Ascending aorta (tissue), 2 donors: ENCODE measurements at regions of chr6 and their contacts with region 1.

Region 1: DNA sequence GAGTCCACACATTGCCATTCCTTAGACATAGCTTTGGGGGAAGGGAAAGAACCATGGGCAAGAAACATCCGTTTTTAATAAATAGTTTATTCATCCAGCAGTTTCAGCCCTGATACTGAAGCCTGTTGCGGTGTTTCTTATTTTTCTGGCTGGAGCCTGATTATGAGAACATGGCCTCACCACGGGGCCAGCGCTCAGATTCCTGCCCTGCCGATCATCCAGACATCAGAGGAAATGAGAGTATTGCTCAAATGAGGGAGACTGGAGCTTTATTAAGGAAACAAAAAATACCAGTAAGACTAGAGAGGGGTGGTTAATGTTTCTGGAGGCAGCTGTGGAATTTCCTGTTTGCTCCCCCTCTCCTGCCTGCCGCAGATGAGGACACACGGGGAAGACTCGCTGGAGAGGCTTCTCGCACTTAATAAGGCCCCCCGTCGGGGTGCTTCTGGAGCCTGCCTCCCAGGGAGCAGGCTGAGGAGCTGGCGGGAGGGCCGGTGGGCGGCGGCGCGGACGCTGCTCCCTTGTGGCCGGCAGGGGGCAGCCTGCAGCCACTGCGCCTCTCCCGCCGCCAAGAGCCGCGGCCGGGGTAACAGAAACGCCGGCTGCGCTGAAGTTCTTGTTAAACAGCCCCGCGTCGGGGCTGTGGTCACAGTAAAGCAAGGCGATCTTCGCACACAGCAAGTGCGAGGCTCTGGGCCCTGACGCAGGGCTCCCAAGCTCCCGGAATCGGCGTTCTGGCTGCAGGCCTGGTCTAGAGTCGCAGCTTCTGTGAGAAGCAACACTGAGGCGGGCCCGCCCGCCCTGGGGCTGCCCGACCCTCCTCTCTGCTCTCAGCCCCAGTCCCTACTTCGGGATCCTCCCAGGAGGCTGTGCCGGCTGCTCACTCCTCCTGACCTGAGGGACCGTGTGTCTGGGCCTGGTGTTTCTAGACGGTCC is 17.5 kb downstream of the LEMD2 start:
- DNase-seq: peak in 1 of 2 donors; percentile 87
- H3K4me3 ChIP-seq: peak overlapping the region; percentile 18 to 42
- H3K27ac ChIP-seq: peak overlapping the region; percentile 80 to 92
- H3K4me1 ChIP-seq: peaks cover 12 to 44% of the 10 kb centered on the region in 2 donors
- H3K27me3 ChIP-seq: no peaks in the 10 kb centered on the region
- CTCF ChIP-seq: peak; percentile 92 to 97 (median 94)

Region 2: DNA sequence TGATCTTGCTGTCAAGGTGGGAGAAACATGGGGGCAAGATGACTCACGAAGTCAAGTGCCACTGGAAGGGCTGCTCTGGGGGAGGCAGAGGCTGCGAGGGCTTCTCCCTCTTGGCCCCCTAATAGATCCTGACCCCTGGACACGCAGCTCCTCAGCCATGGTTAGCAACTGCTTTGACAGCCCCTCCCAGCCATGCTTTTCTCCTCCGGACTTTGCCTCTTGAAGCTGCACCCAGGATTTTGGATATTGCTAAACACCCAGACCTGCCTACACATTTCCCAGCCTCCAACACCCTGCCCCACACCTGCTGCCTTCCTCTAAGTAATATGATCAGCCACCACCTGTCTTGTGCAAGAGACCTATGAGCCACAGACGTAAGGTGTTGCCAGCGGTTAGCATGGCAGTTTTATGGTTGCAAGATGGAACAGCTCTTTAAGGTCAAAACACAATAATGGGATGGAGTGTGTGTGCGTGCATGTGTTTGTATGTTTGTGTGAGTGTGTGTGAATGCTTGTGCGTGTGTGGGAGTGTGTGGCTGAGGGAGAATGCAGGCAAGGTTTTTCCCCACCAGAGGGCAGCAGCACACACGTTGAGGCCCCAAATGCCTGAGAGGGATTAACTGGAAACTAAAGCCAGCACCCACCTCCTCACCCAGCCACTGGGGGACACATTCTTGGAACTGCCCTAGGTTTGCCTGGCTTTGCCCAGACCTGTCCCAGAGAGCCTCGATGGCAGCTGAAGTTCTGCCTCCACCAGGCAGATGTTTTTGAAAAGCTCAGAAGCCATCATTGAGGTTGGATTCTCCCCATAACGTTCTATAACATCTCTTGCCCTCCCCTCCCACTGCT is 27.2 kb before region 1 on chr6:
- intact Hi-C with region 1: loop called (anchors 2 kb)
- DNase-seq: peak in 1 of 2 donors; percentile 79
- H3K4me3 ChIP-seq: no peak overlapping the region
- H3K27ac ChIP-seq: no peak overlapping the region
- H3K4me1 ChIP-seq: no peaks in the 10 kb centered on the region
- H3K27me3 ChIP-seq: no peaks in the 10 kb centered on the region
- CTCF ChIP-seq: peak; percentile 66 to 83 (median 83)

Region 3: GRCh38 chr6:33788694-33789549 is 17.5 kb after region 1 on chr6 and contains the start of gene LEMD2:
- intact Hi-C with region 1: loop called (anchors 1 kb)
- DNase-seq: peak; percentile 73 to 96
- H3K4me3 ChIP-seq: peak within 1 kb of the TSS; percentile 95
- H3K27ac ChIP-seq: peak within 1 kb of the TSS; percentile 97 to 98
- H3K4me1 ChIP-seq: peaks cover 13 to 29% of the 10 kb centered on the region in 2 donors
- H3K27me3 ChIP-seq: no peaks in the 10 kb centered on the region
- CTCF ChIP-seq: no peak
- total RNA-seq, gene LEMD2: 104 TPM

Region 4: GRCh38 chr6:34154668-34155447 is 383.4 kb after region 1 on chr6:
- intact Hi-C with region 1: loop called (anchors 2 kb)
- DNase-seq: peak in 1 of 2 donors; percentile 65
- H3K4me3 ChIP-seq: peak overlapping the region in 1 of 2 donors; percentile 24
- H3K27ac ChIP-seq: no peak overlapping the region
- H3K4me1 ChIP-seq: peaks cover 0 to 2% of the 10 kb centered on the region in 2 donors
- H3K27me3 ChIP-seq: peaks cover 14% of the 10 kb centered on the region
- CTCF ChIP-seq: peak; percentile 88 to 99 (median 93)